Activated CD4-positive, alpha-beta T cell treated with anti-CD3 and anti-CD28 coated beads for 36 hours (primary cell): ENCODE measurements at regions of chr1 and their contacts with region 1.

Region 1: DNA sequence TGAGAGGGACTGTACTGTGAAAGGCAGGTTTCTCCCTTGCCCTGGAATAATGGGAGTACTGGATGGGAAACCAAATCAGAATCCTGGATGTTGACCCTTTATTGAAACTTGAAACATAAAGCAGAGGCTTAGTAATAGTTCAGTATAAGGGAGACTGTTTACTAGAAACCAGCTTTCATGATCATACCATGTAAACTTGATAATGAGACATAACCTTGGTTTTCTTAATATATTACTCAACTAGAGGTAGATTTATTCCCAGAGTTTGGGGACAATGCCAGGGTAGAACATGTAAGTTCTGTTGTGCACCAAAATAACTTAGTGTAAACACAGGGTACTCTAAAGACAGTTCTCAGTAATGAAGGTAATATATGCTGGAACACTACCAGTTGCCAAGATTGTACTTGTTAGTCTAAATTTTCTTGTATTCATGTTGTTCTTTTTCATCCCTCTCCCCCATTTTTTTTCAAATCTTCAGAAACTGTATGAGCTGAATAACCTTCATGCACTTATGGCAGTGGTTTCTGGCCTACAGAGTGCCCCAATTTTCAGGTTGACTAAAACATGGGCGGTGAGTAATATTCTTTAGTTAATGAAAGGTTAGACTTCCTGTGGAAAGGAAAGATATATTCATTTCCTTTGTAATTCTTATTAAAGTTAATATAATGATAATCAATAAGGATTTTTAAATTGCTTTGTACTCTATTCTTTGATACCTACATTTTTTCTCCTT is 49.6 kb downstream of the ANGPTL1 start:
- DNase-seq: no peak
- ATAC-seq: peak; percentile 66
- H3K4me3 Mint-ChIP-seq: no peak overlapping the region
- H3K27ac Mint-ChIP-seq: no peak overlapping the region
- H3K4me1 Mint-ChIP-seq: peaks cover 8% of the 10 kb centered on the region
- H3K27me3 Mint-ChIP-seq: no peaks in the 10 kb centered on the region

Region 2: DNA sequence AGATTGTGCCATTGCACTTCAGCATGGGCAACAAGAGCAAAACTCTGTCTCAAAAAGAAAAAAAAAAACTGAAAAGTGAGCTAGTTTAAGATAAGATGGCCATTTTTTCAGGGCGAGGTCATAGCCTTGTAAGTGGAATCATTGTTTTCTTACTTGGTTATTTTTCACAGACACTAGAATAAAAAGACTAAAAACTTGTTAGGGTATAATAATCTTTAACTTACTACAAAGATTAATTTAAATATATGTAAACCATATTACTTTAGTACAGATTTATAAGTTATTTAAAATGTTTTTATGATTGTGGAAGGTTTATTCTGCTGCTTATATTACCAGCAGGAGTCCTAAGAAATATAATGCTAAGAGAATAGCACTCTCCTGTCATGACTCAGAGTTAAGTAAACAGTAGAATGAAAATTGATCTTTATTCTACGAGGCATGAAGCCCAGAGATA is 26.1 kb after region 1 on chr1:
- CTCF ChIA-PET with region 1: no interaction called
- POLR2A ChIA-PET with region 1: no interaction called
- intact Hi-C with region 1: loop called in 1 of 2 experiments (anchors 2 kb)
- DNase-seq: no peak
- ATAC-seq: no peak
- H3K4me3 Mint-ChIP-seq: no peak overlapping the region
- H3K27ac Mint-ChIP-seq: no peak overlapping the region
- H3K4me1 Mint-ChIP-seq: no peaks in the 10 kb centered on the region
- H3K27me3 Mint-ChIP-seq: no peaks in the 10 kb centered on the region